GM23248 (cell line): ENCODE measurements at regions of chr2 and their contacts with region 1.

Region 1: DNA sequence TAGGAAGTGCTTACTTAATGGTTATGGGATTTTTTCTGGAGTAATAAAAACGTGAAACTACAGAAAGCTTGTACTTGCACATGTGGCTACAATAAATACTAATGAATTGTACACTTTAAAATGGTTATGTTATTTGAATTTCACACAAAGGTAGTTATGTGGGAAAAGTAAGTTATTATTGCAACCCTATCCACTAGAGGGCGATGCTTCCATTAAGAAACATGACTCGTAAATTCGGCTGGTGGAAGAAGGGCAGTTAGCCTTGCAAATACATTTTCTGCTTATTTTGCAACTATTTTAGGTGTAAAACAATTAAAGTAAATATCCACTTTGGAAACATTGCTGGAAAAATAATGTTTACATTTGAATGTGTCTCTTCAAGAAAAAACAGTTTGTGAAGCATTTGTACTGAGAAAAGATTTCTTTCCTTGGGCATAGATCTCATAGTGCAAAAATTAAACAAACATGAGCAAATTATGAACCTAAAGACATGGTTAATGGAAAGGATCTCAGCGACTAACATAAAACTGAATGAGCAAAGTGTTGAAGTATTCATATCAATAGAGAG is 68.1 kb upstream of the CSRNP3 start:
- DNase-seq: peak; percentile 86
- H3K4me3 ChIP-seq: no peak overlapping the region
- H3K27ac ChIP-seq: no peak overlapping the region
- H3K4me1 ChIP-seq: no peaks in the 10 kb centered on the region
- H3K27me3 ChIP-seq: no peaks in the 10 kb centered on the region

Region 2: GRCh38 chr2:165681841-165682240 is 280.5 kb after region 1 on chr2:
- in situ Hi-C with region 1: loop called (anchors 10 kb)
- DNase-seq: no peak
- H3K4me3 ChIP-seq: no peak overlapping the region
- H3K27ac ChIP-seq: no peak overlapping the region
- H3K4me1 ChIP-seq: no peaks in the 10 kb centered on the region
- H3K27me3 ChIP-seq: no peaks in the 10 kb centered on the region

Region 3: DNA sequence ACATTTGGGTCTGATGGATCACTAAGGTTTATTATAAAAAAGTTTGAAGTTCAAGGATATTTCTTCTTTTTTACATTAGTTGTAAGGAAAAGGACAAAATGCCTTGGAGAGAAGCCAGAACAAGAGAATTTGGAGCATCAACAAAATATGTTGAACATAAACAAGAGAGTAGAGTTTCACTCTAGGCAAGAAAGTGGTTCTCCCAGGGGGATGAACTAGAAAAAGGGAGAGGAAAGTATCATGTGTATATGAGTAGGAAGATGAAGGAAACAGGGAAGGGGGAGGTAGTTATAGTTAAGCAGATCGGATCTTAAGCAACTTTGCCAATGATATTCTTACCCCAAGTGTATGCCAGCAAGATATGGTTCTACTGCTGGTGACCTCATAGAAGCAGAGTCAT is 456.5 kb after region 1 on chr2:
- in situ Hi-C with region 1: no loop called
- DNase-seq: no peak
- H3K4me3 ChIP-seq: no peak overlapping the region
- H3K27ac ChIP-seq: no peak overlapping the region
- H3K4me1 ChIP-seq: peaks cover 4% of the 10 kb centered on the region; the same call in 1 of the 2 replicates
- H3K27me3 ChIP-seq: no peaks in the 10 kb centered on the region